Caco-2 (cell line): ENCODE measurements at regions of chr11 and their contacts with region 1.

Region 1: DNA sequence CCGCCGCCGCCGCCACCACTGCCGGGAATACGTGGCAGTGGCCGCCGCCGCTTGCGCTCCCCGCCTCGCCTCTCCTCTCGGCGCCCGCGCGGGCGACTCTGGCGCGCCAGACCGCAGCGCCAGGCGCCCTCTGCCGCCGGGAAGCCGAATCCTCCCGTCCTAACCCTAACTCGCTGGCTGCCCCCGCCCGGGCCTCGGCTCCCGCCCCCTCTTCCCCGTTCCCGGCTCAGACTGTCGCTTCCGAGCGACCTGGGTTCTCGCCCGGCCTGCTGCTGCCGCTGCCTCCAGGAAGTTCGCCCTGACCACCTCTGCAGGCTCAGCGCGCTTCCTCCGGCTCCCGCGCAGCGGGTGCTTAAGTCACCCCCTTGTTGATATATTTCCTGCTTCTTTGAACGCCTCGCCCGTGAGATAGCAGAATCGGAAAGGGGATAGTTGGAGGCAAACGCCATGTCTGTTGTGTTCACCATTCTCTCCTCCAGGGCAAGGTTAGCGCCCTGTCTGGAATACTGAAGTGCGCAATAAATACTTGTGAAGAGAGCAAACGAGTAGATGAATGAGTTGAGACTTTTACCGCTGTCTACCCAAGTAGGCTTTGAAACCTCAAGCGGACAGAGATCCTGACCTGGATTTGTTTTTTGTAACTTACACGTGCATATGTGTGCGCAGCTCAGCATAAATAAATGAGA is at the start of gene SMCO4:
- DNase-seq: peak; percentile 92 to 97
- H3K4me3 ChIP-seq: peak within 1 kb of the TSS; percentile 84
- H3K4me3 Mint-ChIP-seq: peak within 1 kb of the TSS; percentile 89
- H3K27ac Mint-ChIP-seq: peak within 1 kb of the TSS; percentile 63
- H3K4me1 ChIP-seq: peaks cover 9% of the 10 kb centered on the region
- H3K4me1 Mint-ChIP-seq: peaks cover 13% of the 10 kb centered on the region
- H3K27me3 ChIP-seq: no peaks in the 10 kb centered on the region
- H3K27me3 Mint-ChIP-seq: peaks cover 5% of the 10 kb centered on the region
- CTCF ChIP-seq: peak; percentile 92 to 94
- total RNA-seq, gene SMCO4: 45.6 and 46.3 TPM in 2 replicates

Region 2: DNA sequence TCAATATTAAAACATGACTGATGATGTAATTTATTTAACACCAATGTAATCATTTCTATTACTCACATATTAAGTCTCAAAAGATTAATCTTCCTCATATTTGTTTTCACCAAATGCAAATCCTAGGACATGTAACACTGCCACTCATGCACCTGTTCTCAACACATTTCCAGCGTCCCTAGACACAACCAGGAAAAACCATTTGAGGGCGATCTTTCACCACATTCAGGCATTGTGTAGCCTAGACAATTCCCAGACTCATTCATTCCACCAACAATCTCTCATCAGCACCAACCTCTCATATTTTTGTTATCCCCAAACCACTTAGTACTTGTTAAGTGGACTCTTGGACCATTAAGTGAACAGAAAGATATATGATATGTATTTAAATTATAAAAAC is 411.7 kb before region 1 on chr11:
- CTCF ChIA-PET with region 1: no interaction called
- POLR2A ChIA-PET with region 1: no interaction called
- intact Hi-C with region 1: loop called (anchors 10 kb)
- DNase-seq: peak in 1 of 2 experiments; percentile 41
- H3K4me3 ChIP-seq: no peak overlapping the region
- H3K4me3 Mint-ChIP-seq: no peak overlapping the region
- H3K27ac Mint-ChIP-seq: no peak overlapping the region
- H3K4me1 ChIP-seq: no peaks in the 10 kb centered on the region
- H3K4me1 Mint-ChIP-seq: no peaks in the 10 kb centered on the region
- H3K27me3 ChIP-seq: no peaks in the 10 kb centered on the region
- H3K27me3 Mint-ChIP-seq: peaks cover 23% of the 10 kb centered on the region
- CTCF ChIP-seq: peak in 1 of 2 experiments; percentile 38

Region 3: DNA sequence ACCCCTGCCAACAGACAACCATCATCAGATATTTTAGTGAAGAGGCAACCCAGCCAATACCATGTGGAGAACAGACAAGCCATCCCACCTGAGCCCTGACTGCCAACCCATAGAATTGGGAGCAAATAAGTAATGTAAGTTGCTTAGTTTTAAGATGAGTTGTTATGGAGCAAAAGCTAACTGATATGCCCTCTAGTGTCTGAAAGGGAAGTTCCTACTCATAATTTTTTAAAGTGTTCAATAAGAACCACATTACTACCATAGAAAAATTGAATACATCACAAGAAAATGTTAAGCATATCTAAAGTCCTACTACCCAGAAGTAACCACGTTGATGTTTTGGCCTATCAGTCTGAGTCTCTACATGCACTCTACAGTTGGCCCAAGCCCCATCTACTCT is 294.8 kb before region 1 on chr11:
- CTCF ChIA-PET with region 1: no interaction called
- POLR2A ChIA-PET with region 1: no interaction called
- intact Hi-C with region 1: loop called (anchors 1 kb)
- DNase-seq: no peak
- H3K4me3 ChIP-seq: no peak overlapping the region
- H3K4me3 Mint-ChIP-seq: no peak overlapping the region
- H3K27ac Mint-ChIP-seq: no peak overlapping the region
- H3K4me1 ChIP-seq: peaks cover 17% of the 10 kb centered on the region
- H3K4me1 Mint-ChIP-seq: peaks cover 19% of the 10 kb centered on the region
- H3K27me3 ChIP-seq: no peaks in the 10 kb centered on the region
- H3K27me3 Mint-ChIP-seq: peaks cover 8% of the 10 kb centered on the region
- CTCF ChIP-seq: peak; percentile 21 to 48

Region 4: GRCh38 chr11:93370260-93370659 is 173.2 kb before region 1 on chr11:
- CTCF ChIA-PET with region 1: no interaction called
- POLR2A ChIA-PET with region 1: no interaction called
- intact Hi-C with region 1: loop called (anchors 5 kb)
- DNase-seq: peak in 1 of 2 experiments; percentile 37
- H3K4me3 ChIP-seq: no peak overlapping the region
- H3K4me3 Mint-ChIP-seq: no peak overlapping the region
- H3K27ac Mint-ChIP-seq: peak overlapping the region; percentile 5
- H3K4me1 ChIP-seq: peaks cover 7% of the 10 kb centered on the region; the same call in 1 of the 2 replicates
- H3K4me1 Mint-ChIP-seq: peaks cover 13% of the 10 kb centered on the region
- H3K27me3 ChIP-seq: no peaks in the 10 kb centered on the region
- H3K27me3 Mint-ChIP-seq: no peaks in the 10 kb centered on the region
- CTCF ChIP-seq: no peak

Region 5: GRCh38 chr11:93487032-93487483 is 56.4 kb before region 1 on chr11:
- CTCF ChIA-PET with region 1: no interaction called
- POLR2A ChIA-PET with region 1: no interaction called
- intact Hi-C with region 1: loop called (anchors 1 kb)
- DNase-seq: peak; percentile 80 to 86
- H3K4me3 ChIP-seq: no peak overlapping the region
- H3K4me3 Mint-ChIP-seq: no peak overlapping the region
- H3K27ac Mint-ChIP-seq: no peak overlapping the region
- H3K4me1 ChIP-seq: peaks cover 14% of the 10 kb centered on the region
- H3K4me1 Mint-ChIP-seq: peaks cover 11% of the 10 kb centered on the region
- H3K27me3 ChIP-seq: no peaks in the 10 kb centered on the region
- H3K27me3 Mint-ChIP-seq: no peaks in the 10 kb centered on the region
- CTCF ChIP-seq: no peak

Region 6: GRCh38 chr11:93564895-93565294 is 21.5 kb after region 1 on chr11:
- CTCF ChIA-PET with region 1: no interaction called
- POLR2A ChIA-PET with region 1: no interaction called
- intact Hi-C with region 1: no loop called
- DNase-seq: peak in 1 of 2 experiments; percentile 18
- H3K4me3 ChIP-seq: no peak overlapping the region
- H3K4me3 Mint-ChIP-seq: no peak overlapping the region
- H3K27ac Mint-ChIP-seq: no peak overlapping the region
- H3K4me1 ChIP-seq: peaks cover 5% of the 10 kb centered on the region; the same call in 1 of the 2 replicates
- H3K4me1 Mint-ChIP-seq: peaks cover 8% of the 10 kb centered on the region
- H3K27me3 ChIP-seq: no peaks in the 10 kb centered on the region
- H3K27me3 Mint-ChIP-seq: no peaks in the 10 kb centered on the region
- CTCF ChIP-seq: no peak

Region 7: GRCh38 chr11:93623179-93623578 is 79.7 kb after region 1 on chr11:
- CTCF ChIA-PET with region 1: no interaction called
- POLR2A ChIA-PET with region 1: no interaction called
- intact Hi-C with region 1: no loop called
- DNase-seq: no peak
- H3K4me3 ChIP-seq: no peak overlapping the region
- H3K4me3 Mint-ChIP-seq: no peak overlapping the region
- H3K27ac Mint-ChIP-seq: no peak overlapping the region
- H3K4me1 ChIP-seq: peaks cover 13% of the 10 kb centered on the region
- H3K4me1 Mint-ChIP-seq: peaks cover 14% of the 10 kb centered on the region
- H3K27me3 ChIP-seq: no peaks in the 10 kb centered on the region
- H3K27me3 Mint-ChIP-seq: no peaks in the 10 kb centered on the region
- CTCF ChIP-seq: no peak